ENCODE measurements at regions of chr17 and their contacts with region 1.

Region 1: DNA sequence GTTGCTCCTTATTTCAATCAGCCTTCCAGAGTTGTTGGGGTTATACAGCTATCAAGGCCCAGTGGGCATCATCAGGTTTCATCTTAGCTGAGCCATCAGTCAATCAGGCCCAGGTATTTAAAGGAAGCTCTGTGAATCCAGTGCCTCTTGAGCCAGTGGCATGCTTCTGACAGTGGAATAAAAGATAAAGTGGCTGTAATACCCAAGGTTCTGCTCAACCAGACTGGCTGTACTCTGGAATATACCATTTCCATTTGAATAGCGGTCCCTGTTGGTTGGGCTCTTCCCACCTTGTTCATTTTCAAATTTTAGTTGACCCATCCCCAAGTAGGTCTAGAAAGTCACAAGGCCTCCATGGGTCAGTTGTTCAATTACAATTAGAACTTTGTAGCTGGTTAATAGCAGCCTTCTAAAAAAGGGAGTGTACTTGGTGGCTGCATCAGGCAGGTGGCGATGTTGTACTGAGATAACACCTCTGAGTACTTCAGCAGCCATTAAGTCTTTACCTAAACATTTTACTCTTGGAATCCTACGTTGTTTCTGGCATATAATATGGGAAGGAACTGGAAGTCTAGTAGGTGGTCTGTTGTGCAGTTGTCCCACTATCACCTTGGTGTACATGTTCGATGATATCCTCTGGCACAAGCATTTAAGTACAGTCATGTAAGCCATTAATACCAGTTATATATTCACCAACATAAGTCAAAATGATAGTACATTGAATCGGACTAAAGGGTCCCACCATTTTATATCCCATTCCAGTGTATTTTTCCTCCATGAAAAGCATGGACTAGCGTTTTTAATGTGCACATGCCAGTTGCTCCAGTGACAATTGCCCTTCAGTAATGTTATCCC is 294.1 kb downstream of the BCAS3 start:
- DNase-seq: peak; percentile 62
- ATAC-seq: peak; percentile 51
- H3K4me3 Mint-ChIP-seq: no peak overlapping the region
- H3K27ac Mint-ChIP-seq: no peak overlapping the region
- H3K4me1 Mint-ChIP-seq: no peaks in the 10 kb centered on the region
- H3K27me3 Mint-ChIP-seq: no peaks in the 10 kb centered on the region

Region 2: GRCh38 chr17:61389670-61390478 is 418.1 kb after region 1 on chr17:
- CTCF ChIA-PET with region 1: no interaction called
- POLR2A ChIA-PET with region 1: no interaction called
- intact Hi-C with region 1: loop called in 1 of 2 experiments (anchors 1 kb)
- DNase-seq: peak; percentile 74
- ATAC-seq: peak; percentile 74
- H3K4me3 Mint-ChIP-seq: no peak overlapping the region
- H3K27ac Mint-ChIP-seq: no peak overlapping the region
- H3K4me1 Mint-ChIP-seq: no peaks in the 10 kb centered on the region
- H3K27me3 Mint-ChIP-seq: peaks cover 7% of the 10 kb centered on the region